ENCODE measurements at regions of chr2 and their contacts with region 1.

Region 1: DNA sequence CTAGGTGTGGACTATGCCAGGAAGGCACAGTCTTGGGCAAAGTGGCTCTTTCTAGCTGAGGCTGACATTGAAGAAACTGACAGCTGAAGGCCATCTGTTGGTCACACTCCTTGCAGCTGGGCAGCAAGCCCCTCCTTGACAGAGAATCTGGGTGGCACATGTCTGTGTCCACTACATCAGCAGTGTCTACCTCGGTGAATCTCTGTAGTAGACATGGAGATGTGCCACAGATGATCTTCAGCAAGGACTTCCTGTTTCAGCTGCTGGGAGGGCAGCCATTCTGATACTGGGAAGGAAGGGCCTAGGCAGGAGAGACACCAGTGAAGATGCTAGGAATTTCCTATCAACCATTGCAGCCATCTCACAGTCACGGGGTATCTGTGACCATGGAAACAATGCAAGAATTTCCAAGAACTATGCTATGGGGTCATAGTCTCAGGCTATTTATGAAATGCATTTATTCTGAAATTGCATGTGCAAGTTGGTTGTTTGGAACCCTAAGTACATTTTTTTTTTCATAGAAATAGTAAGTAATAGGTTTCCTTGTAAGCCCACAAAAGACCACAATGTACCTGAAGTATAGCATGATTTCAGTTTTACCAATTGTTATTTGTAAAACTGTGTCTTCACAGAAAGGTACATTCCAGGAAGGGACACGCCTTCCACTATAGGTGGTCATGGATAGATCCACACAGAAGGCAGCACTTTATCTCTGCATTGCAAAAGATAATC is 63.8 kb upstream of the DARS1 start:
- DNase-seq: no peak
- H3K4me3 Mint-ChIP-seq: peak overlapping the region; percentile 45
- H3K27ac Mint-ChIP-seq: peak overlapping the region; percentile 81
- H3K4me1 Mint-ChIP-seq: peaks cover 90% of the 10 kb centered on the region
- H3K27me3 Mint-ChIP-seq: no peaks in the 10 kb centered on the region

Region 2: GRCh38 chr2:136068581-136069227 is 19.5 kb after region 1 on chr2:
- intact Hi-C with region 1: loop called (anchors 2 kb)
- DNase-seq: no peak
- H3K4me3 Mint-ChIP-seq: peak overlapping the region; percentile 49
- H3K27ac Mint-ChIP-seq: peak overlapping the region; percentile 46
- H3K4me1 Mint-ChIP-seq: peaks cover 63% of the 10 kb centered on the region
- H3K27me3 Mint-ChIP-seq: no peaks in the 10 kb centered on the region